Panc1 (cell line): ENCODE measurements at regions of chr7 and their contacts with region 1.

Region 1: DNA sequence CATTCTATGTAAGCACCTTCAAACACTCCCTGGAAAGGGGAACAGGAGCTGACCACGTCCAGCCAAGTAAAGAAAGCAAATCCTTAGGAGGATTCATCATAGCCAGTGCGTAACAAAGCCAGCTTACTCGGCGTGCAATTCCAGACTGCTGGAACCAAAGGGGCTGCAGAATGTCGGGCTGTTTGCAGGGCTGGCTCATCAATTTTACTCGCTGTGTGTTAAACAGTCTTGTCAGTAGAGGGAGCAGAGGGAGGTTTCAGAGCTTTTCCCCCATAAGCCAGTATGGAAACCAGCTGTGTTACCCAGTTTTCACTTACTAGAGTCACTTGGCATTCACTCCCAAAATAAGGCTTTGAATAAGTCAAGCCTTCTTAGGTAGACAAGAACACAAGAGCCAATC is 127.1 kb downstream of the KMT2E start:
- DNase-seq: no peak
- ATAC-seq: peak; percentile 77
- H3K4me3 ChIP-seq: no peak overlapping the region
- H3K27ac ChIP-seq: no peak overlapping the region
- H3K4me1 ChIP-seq: no peaks in the 10 kb centered on the region
- H3K27me3 ChIP-seq: no peaks in the 10 kb centered on the region
- CTCF ChIP-seq: peak; percentile 57

Region 2: GRCh38 chr7:105173586-105173985 is 32.5 kb after region 1 on chr7:
- CTCF ChIA-PET with region 1: no interaction called
- POLR2A ChIA-PET with region 1: interaction called, 12 read pairs
- in situ Hi-C with region 1: no loop called
- intact Hi-C with region 1: no loop called
- DNase-seq: no peak
- ATAC-seq: no peak
- H3K4me3 ChIP-seq: no peak overlapping the region
- H3K27ac ChIP-seq: no peak overlapping the region
- H3K4me1 ChIP-seq: no peaks in the 10 kb centered on the region
- H3K27me3 ChIP-seq: no peaks in the 10 kb centered on the region
- CTCF ChIP-seq: no peak

Region 3: GRCh38 chr7:105245398-105246114 is 104.5 kb after region 1 on chr7:
- CTCF ChIA-PET with region 1: no interaction called
- POLR2A ChIA-PET with region 1: no interaction called
- in situ Hi-C with region 1: no loop called
- intact Hi-C with region 1: no loop called
- DNase-seq: no peak
- ATAC-seq: no peak
- H3K4me3 ChIP-seq: no peak overlapping the region
- H3K27ac ChIP-seq: no peak overlapping the region
- H3K4me1 ChIP-seq: peaks cover 11% of the 10 kb centered on the region; the same call in 1 of the 2 replicates
- H3K27me3 ChIP-seq: no peaks in the 10 kb centered on the region
- CTCF ChIP-seq: no peak